ENCODE measurements at regions of chr2 and their contacts with region 1.

Region 1: DNA sequence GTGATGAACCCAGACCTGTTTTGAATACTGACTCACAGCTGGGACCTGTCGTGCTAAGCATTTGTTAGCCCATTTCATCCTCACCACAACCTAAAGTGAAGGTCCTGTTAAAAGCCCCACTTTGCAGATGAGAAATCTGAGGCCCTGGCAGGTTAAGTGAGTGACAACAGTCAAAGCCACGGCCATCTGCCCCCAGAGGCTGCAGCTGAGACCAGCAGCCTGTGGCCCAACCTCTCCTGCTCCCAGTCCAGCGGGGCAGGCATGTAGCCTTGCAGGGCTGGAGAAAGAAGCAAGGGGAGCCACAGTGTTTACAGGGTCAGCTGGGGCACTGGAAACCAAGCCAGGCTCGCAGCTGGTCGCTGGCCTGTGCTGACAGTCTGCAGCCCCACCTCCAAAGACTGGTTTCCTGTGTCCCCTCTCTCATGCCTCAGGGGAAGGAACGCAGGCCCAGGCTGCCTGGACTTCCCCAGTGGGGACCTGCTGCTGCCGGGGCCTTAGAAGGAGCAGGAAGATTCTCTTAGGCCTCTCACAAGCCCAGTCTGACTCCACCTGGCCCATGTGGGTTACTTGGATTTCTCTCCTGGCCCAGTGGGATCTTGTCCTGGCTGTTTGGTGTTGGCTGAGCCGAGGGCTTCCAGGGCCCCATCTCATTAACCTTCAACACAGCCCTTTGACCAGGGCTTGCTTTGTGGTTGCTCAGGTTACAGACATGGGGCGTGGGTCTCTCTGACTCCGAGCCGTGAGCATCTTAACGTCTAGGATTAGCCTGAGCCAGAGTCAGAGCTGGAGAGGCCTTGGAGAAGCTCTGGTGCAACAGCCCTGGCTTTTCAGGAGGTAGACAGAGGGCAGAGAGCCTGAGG is 1.7 kb downstream of the INPP5D start:
- DNase-seq: peak in 1 of 5 donors; percentile 69
- H3K4me3 ChIP-seq: peak overlapping the region; percentile 95 to 98
- H3K4me3 Mint-ChIP-seq: peak overlapping the region; percentile 87 to 97 (median 97)
- H3K27ac ChIP-seq: peak overlapping the region; percentile 91
- H3K27ac Mint-ChIP-seq: peak overlapping the region; percentile 91 to 99 (median 95)
- H3K4me1 ChIP-seq: peaks cover 57% of the 10 kb centered on the region
- H3K4me1 Mint-ChIP-seq: peaks cover 28 to 77% (median 50%) of the 10 kb centered on the region in 4 donors
- H3K27me3 ChIP-seq: no peaks in the 10 kb centered on the region
- H3K27me3 Mint-ChIP-seq: no peaks in the 10 kb centered on the region

Region 2: GRCh38 chr2:232574674-232575403 is 487.0 kb before region 1 on chr2:
- CTCF ChIA-PET with region 1: no interaction called
- POLR2A ChIA-PET with region 1: no interaction called
- intact Hi-C with region 1: no loop called
- DNase-seq: no peak
- H3K4me3 ChIP-seq: no peak overlapping the region
- H3K4me3 Mint-ChIP-seq: no peak overlapping the region
- H3K27ac ChIP-seq: no peak overlapping the region
- H3K27ac Mint-ChIP-seq: peak overlapping the region in 1 of 7 donors; percentile 46
- H3K4me1 ChIP-seq: no peaks in the 10 kb centered on the region
- H3K4me1 Mint-ChIP-seq: peaks cover 0 to 4% (median 0%) of the 10 kb centered on the region in 4 donors
- H3K27me3 ChIP-seq: no peaks in the 10 kb centered on the region
- H3K27me3 Mint-ChIP-seq: no peaks in the 10 kb centered on the region

Region 3: GRCh38 chr2:233075966-233076339 is 14.1 kb after region 1 on chr2:
- CTCF ChIA-PET with region 1: interaction called, 40 read pairs
- POLR2A ChIA-PET with region 1: interaction called, 426 read pairs
- intact Hi-C with region 1: loop called (anchors 1 kb)
- DNase-seq: peak; percentile 45 to 69 (median 50)
- H3K4me3 ChIP-seq: peak overlapping the region; percentile 9 to 41
- H3K4me3 Mint-ChIP-seq: no peak overlapping the region
- H3K27ac ChIP-seq: peak overlapping the region; percentile 44
- H3K27ac Mint-ChIP-seq: no peak overlapping the region
- H3K4me1 ChIP-seq: peaks cover 92% of the 10 kb centered on the region
- H3K4me1 Mint-ChIP-seq: peaks cover 37 to 42% (median 41%) of the 10 kb centered on the region in 4 donors
- H3K27me3 ChIP-seq: no peaks in the 10 kb centered on the region
- H3K27me3 Mint-ChIP-seq: peaks cover 0 to 1% of the 10 kb centered on the region in 2 donors

Region 4: DNA sequence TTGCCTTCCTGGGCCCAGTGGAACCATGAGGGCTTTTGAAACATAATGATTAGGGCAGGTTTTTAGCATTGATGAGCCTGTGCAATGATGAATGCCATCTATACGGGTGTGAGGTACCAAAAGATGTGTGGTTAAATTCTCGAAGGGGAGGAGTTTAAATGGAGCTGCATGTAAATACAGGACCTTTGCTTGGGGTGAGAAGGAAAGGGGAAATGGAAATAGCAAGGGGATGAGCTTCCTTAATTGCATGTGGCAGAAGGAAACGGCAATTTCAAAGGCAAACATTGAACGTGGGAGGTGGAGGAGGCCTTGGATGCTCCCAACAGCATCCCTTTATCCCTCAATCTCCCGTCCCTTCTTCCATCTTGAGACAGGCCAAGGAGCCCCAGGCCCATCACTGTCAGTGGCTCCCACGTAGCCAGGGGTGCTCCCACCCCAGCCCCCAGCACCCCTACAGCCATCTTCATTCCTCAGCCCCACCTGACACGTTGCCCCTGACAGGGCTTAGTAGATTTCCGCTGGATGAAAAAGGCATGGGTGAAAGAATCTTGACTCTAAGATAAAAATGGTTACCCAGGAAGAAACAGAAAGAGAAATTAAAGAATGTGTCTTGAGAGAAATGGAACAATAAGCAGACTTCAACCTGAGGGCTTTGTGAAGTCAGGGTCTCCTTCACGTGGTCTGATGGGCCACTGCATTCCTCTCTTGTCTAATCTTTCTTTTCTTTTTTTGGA is 30.8 kb after region 1 on chr2:
- CTCF ChIA-PET with region 1: interaction called, 17 read pairs
- POLR2A ChIA-PET with region 1: interaction called, 426 read pairs
- intact Hi-C with region 1: loop called (anchors 2 kb)
- DNase-seq: no peak
- H3K4me3 ChIP-seq: no peak overlapping the region
- H3K4me3 Mint-ChIP-seq: peak overlapping the region in 2 of 8 donors; percentile 14 to 16
- H3K27ac ChIP-seq: no peak overlapping the region
- H3K27ac Mint-ChIP-seq: peak overlapping the region in 6 of 7 donors; percentile 70 to 86 (median 75)
- H3K4me1 ChIP-seq: peaks cover 58% of the 10 kb centered on the region
- H3K4me1 Mint-ChIP-seq: peaks cover 44 to 87% (median 66%) of the 10 kb centered on the region in 4 donors
- H3K27me3 ChIP-seq: no peaks in the 10 kb centered on the region
- H3K27me3 Mint-ChIP-seq: no peaks in the 10 kb centered on the region

Region 5: DNA sequence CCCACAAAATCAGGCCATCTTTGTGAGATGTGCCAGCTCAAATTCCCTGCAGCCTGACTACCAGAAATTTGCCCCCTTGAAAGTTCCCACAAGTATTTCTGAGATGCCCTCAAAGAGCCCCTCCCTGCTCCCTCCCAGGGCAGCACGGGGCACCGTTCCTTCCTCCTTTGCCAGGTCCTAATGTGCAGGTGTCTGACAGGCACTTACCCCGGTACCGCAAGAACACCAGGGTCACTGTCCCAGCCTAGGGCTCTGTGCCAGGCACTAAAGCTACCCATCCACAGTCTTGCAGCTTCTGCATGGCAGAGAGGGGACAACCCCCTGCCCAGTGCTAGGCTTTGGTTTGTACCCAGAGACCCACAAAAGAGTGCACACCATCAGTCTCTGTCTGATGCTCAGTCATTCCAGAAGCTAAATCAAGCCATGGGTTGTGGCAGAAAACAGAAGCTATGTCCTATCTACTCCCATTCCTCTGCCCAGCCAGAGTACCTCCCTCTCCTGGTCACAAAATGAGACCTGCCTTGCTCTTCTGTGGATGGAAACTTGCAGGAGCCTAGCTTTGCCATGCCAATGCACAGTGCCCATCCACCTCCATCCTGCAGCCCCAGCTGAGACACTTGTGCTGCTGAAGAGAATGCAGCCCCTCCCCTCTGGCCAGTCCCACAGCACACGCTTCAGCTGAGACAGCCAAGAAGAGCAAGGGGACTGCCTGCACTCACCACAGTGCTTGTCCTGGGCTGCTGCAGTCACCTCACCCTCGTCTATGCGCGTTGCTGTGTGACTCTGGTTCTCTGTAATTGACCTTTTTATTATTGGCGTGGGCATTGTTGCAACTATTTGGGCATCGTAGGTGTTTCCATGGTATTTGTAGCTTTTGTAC is 47.0 kb after region 1 on chr2:
- CTCF ChIA-PET with region 1: interaction called, 3 read pairs
- POLR2A ChIA-PET with region 1: interaction called, 14 read pairs
- intact Hi-C with region 1: no loop called
- DNase-seq: no peak
- H3K4me3 ChIP-seq: no peak overlapping the region
- H3K4me3 Mint-ChIP-seq: peak overlapping the region in 5 of 8 donors; percentile 25 to 62 (median 30)
- H3K27ac ChIP-seq: no peak overlapping the region
- H3K27ac Mint-ChIP-seq: peak overlapping the region; percentile 67 to 89 (median 81)
- H3K4me1 ChIP-seq: peaks cover 61% of the 10 kb centered on the region
- H3K4me1 Mint-ChIP-seq: peaks cover 53 to 90% (median 70%) of the 10 kb centered on the region in 4 donors
- H3K27me3 ChIP-seq: no peaks in the 10 kb centered on the region
- H3K27me3 Mint-ChIP-seq: no peaks in the 10 kb centered on the region

Region 6: GRCh38 chr2:233135421-233135820 is 73.6 kb after region 1 on chr2:
- CTCF ChIA-PET with region 1: interaction called, 6 read pairs
- POLR2A ChIA-PET with region 1: interaction called, 14 read pairs
- intact Hi-C with region 1: loop called (anchors 5 kb)
- DNase-seq: no peak
- H3K4me3 ChIP-seq: no peak overlapping the region
- H3K4me3 Mint-ChIP-seq: no peak overlapping the region
- H3K27ac ChIP-seq: no peak overlapping the region
- H3K27ac Mint-ChIP-seq: peak overlapping the region in 2 of 7 donors; percentile 10 to 71
- H3K4me1 ChIP-seq: no peaks in the 10 kb centered on the region
- H3K4me1 Mint-ChIP-seq: peaks cover 13 to 32% (median 21%) of the 10 kb centered on the region in 4 donors
- H3K27me3 ChIP-seq: no peaks in the 10 kb centered on the region
- H3K27me3 Mint-ChIP-seq: no peaks in the 10 kb centered on the region

Region 7: GRCh38 chr2:233251306-233252116 is 189.7 kb after region 1 on chr2 and contains the start of gene ATG16L1:
- CTCF ChIA-PET with region 1: interaction called, 36 read pairs
- POLR2A ChIA-PET with region 1: interaction called, 28 read pairs
- intact Hi-C with region 1: loop called (anchors 1 kb)
- DNase-seq: peak; percentile 93 to 96 (median 95)
- H3K4me3 ChIP-seq: peak within 1 kb of the TSS; percentile 96 to 98
- H3K4me3 Mint-ChIP-seq: peak within 1 kb of the TSS; percentile 90 to 94 (median 93)
- H3K27ac ChIP-seq: peak within 1 kb of the TSS; percentile 89
- H3K27ac Mint-ChIP-seq: peak within 1 kb of the TSS; percentile 94 to 98 (median 98)
- H3K4me1 ChIP-seq: peaks cover 84% of the 10 kb centered on the region
- H3K4me1 Mint-ChIP-seq: peaks cover 57 to 83% (median 68%) of the 10 kb centered on the region in 4 donors
- H3K27me3 ChIP-seq: no peaks in the 10 kb centered on the region
- H3K27me3 Mint-ChIP-seq: no peaks in the 10 kb centered on the region
- total RNA-seq, gene ATG16L1: 81.1 to 89.4 TPM

Measured in CD4-positive, alpha-beta memory T cell (primary cell).